ENCODE measurements at regions of chr3 and their contacts with region 1.

Region 1: DNA sequence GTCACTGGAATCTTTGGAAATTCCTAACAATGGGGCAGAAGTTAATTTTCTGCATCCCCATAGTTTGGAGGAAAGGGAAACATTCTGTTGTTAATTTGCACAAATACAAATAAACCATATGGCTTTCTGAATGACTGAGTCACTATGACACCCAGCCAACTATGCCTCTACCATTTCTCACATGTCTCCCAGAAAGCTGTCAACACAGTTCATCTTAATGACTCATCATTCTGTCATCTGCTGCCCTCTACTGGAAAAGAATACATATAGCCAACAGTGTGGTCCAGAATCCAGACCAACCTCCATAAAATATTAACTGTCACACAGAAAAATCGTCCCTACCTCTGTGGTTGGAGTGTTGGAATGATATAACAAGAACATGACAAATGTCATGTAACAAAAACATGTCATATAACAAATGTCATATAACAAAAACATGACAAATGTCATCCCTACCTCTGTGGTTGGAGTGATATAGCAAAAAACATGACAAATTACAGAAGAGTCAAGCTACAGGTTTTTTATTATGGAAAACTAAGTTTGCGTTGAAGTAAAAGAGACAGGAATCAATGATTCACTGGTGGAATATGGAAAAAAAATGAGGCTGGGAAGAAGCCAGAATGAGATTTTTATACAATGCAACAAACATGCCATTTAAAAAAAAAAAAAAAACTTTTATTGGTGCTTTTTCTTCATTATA is 47.7 kb upstream of the GYG1 start:
- DNase-seq: no peak

Region 2: GRCh38 chr3:148439254-148439822 is 504.3 kb before region 1 on chr3:
- intact Hi-C with region 1: no loop called
- DNase-seq: no peak

Region 3: DNA sequence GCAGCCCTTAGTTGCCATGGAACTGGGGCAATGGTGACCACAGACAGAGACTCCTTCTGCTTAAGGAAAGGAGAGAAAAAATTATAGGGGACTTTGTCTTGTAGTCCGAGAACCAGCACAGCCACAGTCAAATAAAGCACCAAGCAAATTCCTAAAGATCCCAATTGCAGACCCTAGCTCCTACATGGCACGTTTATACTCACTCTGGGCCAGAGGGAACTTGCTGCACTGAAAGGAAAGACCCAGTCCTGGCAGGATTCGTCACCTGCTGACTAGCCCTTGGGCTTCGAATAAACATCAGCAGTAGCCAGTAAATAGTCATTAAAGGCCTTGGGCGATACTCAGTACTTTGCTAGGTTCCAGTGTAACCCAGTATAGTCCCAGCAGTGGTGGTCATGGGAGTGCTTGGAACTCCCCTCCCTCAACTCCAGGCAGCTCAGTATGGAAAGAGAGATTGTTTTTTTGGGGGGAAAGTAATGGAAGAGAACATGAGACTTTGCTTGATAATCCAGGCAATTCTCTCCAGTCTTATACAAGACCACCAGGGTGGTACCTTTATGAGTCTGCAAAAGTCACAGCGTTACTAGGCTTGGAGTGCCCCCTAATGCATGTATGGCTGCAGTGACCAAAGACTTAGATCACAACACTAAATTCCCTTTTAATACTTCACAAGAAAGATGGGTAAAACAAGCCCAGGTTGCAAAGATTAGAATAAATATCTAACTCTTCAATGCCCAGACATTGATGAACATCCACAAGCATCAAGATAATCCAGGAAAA is 312.3 kb before region 1 on chr3:
- intact Hi-C with region 1: no loop called
- DNase-seq: no peak

Region 4: GRCh38 chr3:148861277-148861869 is 82.3 kb before region 1 on chr3:
- intact Hi-C with region 1: loop called (anchors 2 kb)
- DNase-seq: no peak

Region 5: GRCh38 chr3:148902031-148902791 is 41.4 kb before region 1 on chr3:
- intact Hi-C with region 1: no loop called
- DNase-seq: no peak

Region 6: GRCh38 chr3:149061776-149062175 is 118.1 kb after region 1 on chr3:
- intact Hi-C with region 1: no loop called
- DNase-seq: no peak

Measured in cardiac septum (tissue), 1 donor.